Activated B cell treated with CpG ODN at 0.5 μM for 24 hours (primary cell): ENCODE measurements at regions of chr1 and their contacts with region 1.

Region 1: DNA sequence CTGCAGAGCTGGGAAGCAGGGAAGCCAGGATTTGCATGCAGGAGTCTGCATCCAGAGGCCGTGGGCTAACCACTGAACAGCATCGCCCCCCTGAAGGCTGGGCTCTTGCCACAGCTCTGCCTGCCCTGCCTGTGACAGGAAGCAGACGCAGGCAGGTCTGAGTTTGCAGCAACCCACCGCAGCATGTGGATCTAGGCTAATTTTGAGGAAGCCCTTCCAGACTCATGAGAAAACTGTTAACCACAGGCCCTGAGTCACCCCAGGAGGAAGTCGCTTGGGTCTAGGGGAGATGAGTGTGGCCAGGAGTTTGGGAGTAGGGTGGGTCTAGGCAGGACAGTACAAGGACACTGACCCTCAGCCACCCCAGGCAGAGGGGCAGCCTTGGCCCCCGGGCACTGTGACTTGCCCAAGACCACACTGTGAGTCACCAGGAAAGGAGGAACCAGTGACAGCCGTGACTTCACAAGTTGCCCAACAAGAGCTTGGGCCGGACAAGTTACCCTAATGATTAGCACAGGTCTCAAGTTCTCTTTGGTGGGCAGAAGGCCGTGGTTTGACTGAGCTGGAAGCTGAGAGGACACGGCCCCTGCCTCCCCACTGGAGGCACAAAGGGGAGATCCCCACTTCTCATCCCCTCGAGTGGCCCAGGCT is 904 bp downstream of the LAPTM5 start:
- DNase-seq: peak; percentile 65
- ATAC-seq: peak; percentile 35
- H3K4me3 Mint-ChIP-seq: peak overlapping the region; percentile 99
- H3K27ac Mint-ChIP-seq: peak overlapping the region; percentile 96
- H3K4me1 Mint-ChIP-seq: peaks cover 89% of the 10 kb centered on the region
- H3K27me3 Mint-ChIP-seq: no peaks in the 10 kb centered on the region
- CTCF ChIP-seq: no peak

Region 2: DNA sequence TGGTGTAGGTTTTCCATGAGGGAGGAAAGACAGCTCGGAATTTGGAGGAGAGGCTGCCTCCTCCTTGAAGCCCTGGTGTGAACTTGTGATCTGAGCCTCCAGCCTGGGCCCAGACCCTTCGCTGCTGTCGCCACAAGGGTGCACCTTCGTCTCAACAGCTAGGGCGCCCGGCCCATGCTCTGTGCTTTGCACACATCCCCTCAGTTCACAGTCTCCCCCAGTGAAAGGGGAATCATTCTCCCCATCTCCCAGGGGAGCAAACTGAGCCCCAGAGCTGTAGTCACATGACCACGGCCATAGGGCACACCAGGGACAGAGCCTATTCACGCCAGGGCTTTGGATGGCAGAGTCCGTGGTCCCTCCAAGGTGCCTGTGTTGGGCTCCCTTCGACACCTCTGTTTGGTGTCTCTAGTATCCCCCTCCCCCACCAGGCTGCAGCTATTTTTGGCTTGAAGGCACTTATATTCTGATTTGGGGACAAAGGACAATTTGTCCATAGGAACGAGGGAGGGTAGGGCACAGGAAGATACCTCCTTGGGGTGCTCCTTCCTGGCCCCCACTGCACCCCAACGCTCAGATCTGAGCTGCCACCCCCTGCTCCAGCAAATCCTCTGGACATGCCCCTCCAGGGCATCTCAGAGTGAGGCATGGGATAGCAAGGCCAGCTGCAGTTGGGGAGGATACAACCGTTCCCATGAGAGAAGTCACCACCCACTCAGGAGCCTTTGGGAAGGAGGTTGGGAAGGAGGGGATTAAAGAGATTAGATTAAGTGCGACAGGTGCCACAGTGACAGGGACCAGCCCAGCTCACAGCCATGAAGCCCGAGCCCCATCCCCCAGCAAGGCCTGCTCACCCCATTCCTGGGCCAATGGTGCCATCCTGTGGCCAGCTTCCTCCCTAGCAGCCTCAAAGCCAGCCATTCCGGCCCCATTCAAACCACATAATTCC is 49.0 kb before region 1 on chr1:
- CTCF ChIA-PET with region 1: no interaction called
- POLR2A ChIA-PET with region 1: no interaction called
- intact Hi-C with region 1: no loop called
- DNase-seq: peak; percentile 62
- ATAC-seq: peak; percentile 98
- H3K4me3 Mint-ChIP-seq: no peak overlapping the region
- H3K27ac Mint-ChIP-seq: no peak overlapping the region
- H3K4me1 Mint-ChIP-seq: peaks cover 4% of the 10 kb centered on the region
- H3K27me3 Mint-ChIP-seq: peaks cover 26% of the 10 kb centered on the region
- CTCF ChIP-seq: no peak

Region 3: GRCh38 chr1:30732277-30732996 is 24.2 kb before region 1 on chr1:
- CTCF ChIA-PET with region 1: interaction called, 6 read pairs
- POLR2A ChIA-PET with region 1: interaction called, 662 read pairs
- intact Hi-C with region 1: loop called (anchors 1 kb)
- DNase-seq: no peak
- ATAC-seq: peak; percentile 57
- H3K4me3 Mint-ChIP-seq: no peak overlapping the region
- H3K27ac Mint-ChIP-seq: peak overlapping the region; percentile 70
- H3K4me1 Mint-ChIP-seq: peaks cover 72% of the 10 kb centered on the region
- H3K27me3 Mint-ChIP-seq: no peaks in the 10 kb centered on the region
- CTCF ChIP-seq: no peak

Region 4: GRCh38 chr1:30743584-30744059 is 13.0 kb before region 1 on chr1:
- CTCF ChIA-PET with region 1: interaction called, 19 read pairs
- POLR2A ChIA-PET with region 1: interaction called, 662 read pairs
- intact Hi-C with region 1: loop called (anchors 1 kb)
- DNase-seq: no peak
- ATAC-seq: peak; percentile 72
- H3K4me3 Mint-ChIP-seq: peak overlapping the region; percentile 72
- H3K27ac Mint-ChIP-seq: peak overlapping the region; percentile 96
- H3K4me1 Mint-ChIP-seq: peaks cover 99% of the 10 kb centered on the region
- H3K27me3 Mint-ChIP-seq: no peaks in the 10 kb centered on the region
- CTCF ChIP-seq: no peak

Region 5: DNA sequence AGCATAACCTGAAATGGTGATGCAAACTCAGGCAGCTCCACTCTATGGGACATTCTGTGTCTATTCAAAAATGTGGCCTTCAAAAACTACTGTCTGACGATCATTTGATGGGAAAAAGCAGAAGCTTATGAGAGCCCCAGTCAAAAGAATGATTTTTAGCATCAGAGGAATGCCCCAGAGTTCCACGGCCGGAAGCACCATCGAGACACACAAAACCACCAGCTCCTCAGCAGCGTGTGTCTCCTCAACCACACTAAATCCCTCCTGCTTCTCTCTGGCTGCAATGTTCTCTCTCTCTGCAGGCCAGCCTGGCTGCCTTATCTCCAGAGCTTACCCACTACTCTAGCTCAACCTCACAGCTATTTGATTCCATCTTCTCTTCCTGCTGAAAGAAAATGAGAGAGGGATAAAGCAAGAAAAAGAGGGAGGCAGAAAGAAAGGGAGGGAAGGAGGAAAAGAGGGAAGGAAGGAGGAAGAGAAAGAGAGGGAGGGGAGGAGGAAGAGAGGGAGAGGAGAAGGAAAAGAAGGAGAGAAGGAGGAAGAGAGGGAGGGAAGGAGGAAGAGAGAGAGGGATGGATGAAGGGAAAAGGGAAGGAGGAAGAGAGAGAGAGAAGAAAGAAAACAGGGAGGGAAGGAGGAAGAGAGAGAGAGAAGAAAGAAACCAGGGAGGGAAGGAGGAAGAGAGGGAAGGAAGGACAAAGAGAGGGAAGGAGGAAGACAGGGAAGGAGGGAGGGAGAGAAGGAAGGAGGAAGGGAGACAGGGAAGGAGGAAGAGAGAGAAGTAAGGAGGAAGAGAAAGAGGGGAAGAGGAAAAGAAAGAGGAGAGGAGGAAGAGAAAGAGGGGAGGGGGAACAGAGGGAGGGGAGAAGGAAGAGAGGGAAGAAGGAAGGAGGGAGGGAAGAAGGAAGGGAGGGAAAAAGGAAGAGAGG is 34.4 kb after region 1 on chr1:
- CTCF ChIA-PET with region 1: no interaction called
- POLR2A ChIA-PET with region 1: interaction called, 25 read pairs
- intact Hi-C with region 1: no loop called
- DNase-seq: no peak
- ATAC-seq: peak; percentile 82
- H3K4me3 Mint-ChIP-seq: peak overlapping the region; percentile 58
- H3K27ac Mint-ChIP-seq: peak overlapping the region; percentile 72
- H3K4me1 Mint-ChIP-seq: peaks cover 31% of the 10 kb centered on the region
- H3K27me3 Mint-ChIP-seq: peaks cover 12% of the 10 kb centered on the region
- CTCF ChIP-seq: no peak

Region 6: DNA sequence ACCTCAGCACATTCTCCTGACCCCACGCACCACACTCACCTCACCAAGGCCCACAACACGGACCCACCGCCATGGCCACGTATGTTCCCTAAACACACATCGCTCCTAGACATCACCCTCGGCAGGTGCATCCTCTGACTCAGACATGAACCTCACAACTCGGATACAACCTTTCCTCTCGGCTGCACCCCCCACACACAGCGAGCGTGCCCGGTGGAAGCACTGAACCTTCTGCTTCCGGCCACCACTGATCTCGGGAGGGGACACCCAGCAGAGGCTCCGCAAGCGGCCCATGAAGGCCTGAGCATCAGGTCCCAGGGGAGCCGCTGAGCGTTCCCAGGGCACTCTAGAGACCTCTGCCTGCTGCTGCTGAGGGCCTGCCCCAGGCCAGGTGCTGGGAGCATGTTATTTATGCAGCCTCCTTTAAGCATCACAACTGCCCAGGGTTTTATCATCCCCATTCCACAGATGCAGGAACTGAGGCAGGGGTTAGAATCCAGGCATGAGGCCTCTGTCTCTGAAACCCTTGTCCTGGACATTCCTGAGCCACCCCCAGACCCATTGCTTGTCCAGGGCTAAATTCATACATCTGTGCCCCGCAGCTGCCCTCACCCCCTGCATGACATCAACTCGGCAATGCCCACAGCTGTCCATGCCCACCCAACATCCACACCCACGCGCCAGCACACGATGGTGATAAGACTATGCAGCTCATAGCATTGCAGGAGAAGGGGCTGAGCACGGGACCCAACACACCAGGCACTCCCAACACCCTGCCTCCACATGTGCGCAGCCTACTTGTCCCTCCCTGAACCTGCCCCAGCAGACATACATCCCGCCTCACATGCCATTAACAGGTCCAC is 124.9 kb after region 1 on chr1:
- CTCF ChIA-PET with region 1: no interaction called
- POLR2A ChIA-PET with region 1: no interaction called
- intact Hi-C with region 1: loop called (anchors 1 kb)
- DNase-seq: peak; percentile 63
- ATAC-seq: peak; percentile 90
- H3K4me3 Mint-ChIP-seq: peak overlapping the region; percentile 9
- H3K27ac Mint-ChIP-seq: peak overlapping the region; percentile 60
- H3K4me1 Mint-ChIP-seq: peaks cover 19% of the 10 kb centered on the region
- H3K27me3 Mint-ChIP-seq: peaks cover 38% of the 10 kb centered on the region
- CTCF ChIP-seq: no peak

Region 7: DNA sequence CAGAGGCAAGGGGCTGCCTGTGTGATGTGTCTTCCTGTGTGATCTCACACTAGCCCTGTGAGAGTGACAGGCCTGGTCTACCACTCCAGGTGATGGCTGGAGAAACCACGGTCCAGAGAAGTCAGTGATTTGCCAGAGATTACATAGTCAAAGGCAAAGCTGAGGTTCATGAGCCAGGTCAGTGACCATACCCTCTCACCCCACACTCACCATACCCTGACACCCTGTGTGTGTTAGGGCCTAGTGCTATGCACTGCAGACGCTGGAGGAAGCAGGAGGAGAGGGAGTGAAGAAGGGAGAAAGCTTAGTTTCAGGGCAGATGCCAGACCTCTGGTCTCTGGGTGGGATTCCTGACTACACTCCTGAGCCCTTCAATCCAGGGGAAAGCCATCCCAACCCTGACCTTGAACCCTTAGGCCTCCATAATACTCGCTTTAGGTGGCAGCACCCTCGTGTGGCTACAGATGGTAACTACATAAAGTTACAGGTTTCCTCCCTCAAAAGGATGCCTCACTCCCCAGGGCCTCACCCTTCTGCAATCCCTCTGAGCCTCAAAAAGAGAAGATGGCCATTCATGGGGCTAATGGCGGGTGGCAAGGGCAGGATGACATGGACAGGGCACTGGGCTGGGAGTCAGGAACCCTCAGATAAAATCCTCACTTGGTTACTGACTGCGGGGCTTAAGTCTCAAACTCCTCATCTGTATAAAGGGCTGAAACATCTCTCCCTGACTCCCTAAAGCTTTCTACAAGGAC is 172.6 kb after region 1 on chr1:
- CTCF ChIA-PET with region 1: no interaction called
- POLR2A ChIA-PET with region 1: interaction called, 10 read pairs
- intact Hi-C with region 1: no loop called
- DNase-seq: no peak
- ATAC-seq: peak; percentile 56
- H3K4me3 Mint-ChIP-seq: no peak overlapping the region
- H3K27ac Mint-ChIP-seq: no peak overlapping the region
- H3K4me1 Mint-ChIP-seq: peaks cover 14% of the 10 kb centered on the region
- H3K27me3 Mint-ChIP-seq: no peaks in the 10 kb centered on the region
- CTCF ChIP-seq: peak; percentile 76